Spleen (tissue), 13 donors: ENCODE measurements at regions of chr15 and their contacts with region 1.

Region 1: GRCh38 chr15:74373731-74374647 is 6.5 kb upstream of the CYP11A1 start:
- DNase-seq: peak; percentile 97
- H3K4me3 ChIP-seq: peak overlapping the region; percentile 60 to 92 (median 72)
- H3K27ac ChIP-seq: peak overlapping the region; percentile 18 to 87 (median 80)
- H3K4me1 ChIP-seq: peaks cover 10 to 30% (median 25%) of the 10 kb centered on the region in 6 donors
- H3K27me3 ChIP-seq: peaks cover 0 to 14% (median 0%) of the 10 kb centered on the region in 7 donors
- CTCF ChIP-seq: peak; percentile 65 to 95 (median 93)
- POLR2A ChIP-seq: no peak

Region 2: GRCh38 chr15:74489518-74490338 is 115.7 kb after region 1 on chr15:
- intact Hi-C with region 1: loop called (anchors 5 kb)
- DNase-seq: peak; percentile 84
- H3K4me3 ChIP-seq: peak overlapping the region in 1 of 8 donors; percentile 11
- H3K27ac ChIP-seq: no peak overlapping the region
- H3K4me1 ChIP-seq: peaks cover 0 to 12% (median 3%) of the 10 kb centered on the region in 6 donors
- H3K27me3 ChIP-seq: no peaks in the 10 kb centered on the region
- CTCF ChIP-seq: peak; percentile 21 to 82 (median 61)
- POLR2A ChIP-seq: no peak

Region 3: DNA sequence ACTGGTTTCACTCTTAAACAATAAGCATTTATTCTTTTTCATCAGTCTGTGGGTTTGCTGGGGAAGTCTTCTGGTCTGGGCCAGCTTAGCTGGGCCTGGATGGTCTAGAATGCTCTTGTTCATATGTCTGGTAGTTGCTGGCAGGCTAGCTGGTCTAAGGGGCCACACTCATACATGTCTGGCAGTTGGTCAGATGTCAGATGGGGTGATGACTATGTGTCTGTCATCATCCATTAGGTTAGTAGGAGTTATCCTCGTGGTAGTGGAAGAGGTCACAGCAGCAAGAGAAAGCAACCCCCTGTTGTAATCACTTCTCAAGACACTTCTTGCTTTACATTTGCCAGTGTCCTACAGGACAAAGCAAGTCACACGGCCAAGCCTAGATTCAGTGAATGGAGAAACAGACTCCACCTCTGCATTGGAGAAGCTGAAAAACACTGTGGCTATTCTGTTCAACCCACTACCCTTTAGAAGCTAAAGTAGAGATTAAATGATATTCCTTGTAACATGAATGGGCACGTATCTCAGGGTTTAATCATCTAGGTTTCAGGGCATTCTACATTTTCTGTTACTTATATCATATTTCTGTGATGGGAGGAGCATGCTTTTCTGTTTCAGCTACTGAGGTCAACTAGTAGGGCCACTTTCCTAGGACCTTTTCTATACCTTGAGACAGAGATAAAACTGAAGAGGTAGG is 161.5 kb after region 1 on chr15:
- intact Hi-C with region 1: loop called (anchors 5 kb)
- DNase-seq: no peak
- H3K4me3 ChIP-seq: no peak overlapping the region
- H3K27ac ChIP-seq: no peak overlapping the region
- H3K4me1 ChIP-seq: peaks cover 6 to 15% (median 12%) of the 10 kb centered on the region in 6 donors
- H3K27me3 ChIP-seq: no peaks in the 10 kb centered on the region
- CTCF ChIP-seq: no peak
- POLR2A ChIP-seq: no peak

Region 4: DNA sequence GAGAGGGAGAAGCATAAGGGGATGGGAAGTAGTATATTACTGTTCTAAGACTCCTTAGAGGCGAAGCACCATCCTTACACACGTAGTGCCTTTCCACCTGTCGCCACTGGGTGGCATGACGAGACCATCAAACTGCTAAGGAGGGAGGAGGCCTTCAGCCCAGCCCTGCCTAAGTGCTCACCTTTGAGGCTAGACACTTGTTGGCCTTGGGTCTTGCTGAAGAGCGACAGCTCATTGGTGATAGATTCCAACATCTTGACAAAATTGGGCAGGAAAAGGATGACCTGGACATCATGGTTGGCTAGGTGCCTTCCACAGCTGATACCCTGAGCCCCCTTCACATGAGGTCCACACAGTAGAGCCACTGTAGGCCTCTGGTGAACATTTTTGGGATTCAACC is 261.2 kb after region 1 on chr15:
- intact Hi-C with region 1: loop called (anchors 5 kb)
- DNase-seq: peak; percentile 90
- H3K4me3 ChIP-seq: no peak overlapping the region
- H3K27ac ChIP-seq: no peak overlapping the region
- H3K4me1 ChIP-seq: peaks cover 0 to 34% (median 8%) of the 10 kb centered on the region in 6 donors
- H3K27me3 ChIP-seq: no peaks in the 10 kb centered on the region
- CTCF ChIP-seq: peak; percentile 79 to 96 (median 91)
- POLR2A ChIP-seq: no peak

Region 5: GRCh38 chr15:74768771-74769342 is 394.9 kb after region 1 on chr15:
- intact Hi-C with region 1: loop called (anchors 5 kb)
- DNase-seq: peak; percentile 90
- H3K4me3 ChIP-seq: no peak overlapping the region
- H3K27ac ChIP-seq: no peak overlapping the region
- H3K4me1 ChIP-seq: peaks cover 16 to 45% (median 36%) of the 10 kb centered on the region in 6 donors
- H3K27me3 ChIP-seq: peaks cover 0 to 12% (median 0%) of the 10 kb centered on the region in 7 donors
- CTCF ChIP-seq: peak; percentile 74 to 90 (median 85)
- POLR2A ChIP-seq: no peak